Naive thymus-derived CD8-positive, alpha-beta T cell (primary cell): ENCODE measurements at regions of chr7 and their contacts with region 1.

Region 1: DNA sequence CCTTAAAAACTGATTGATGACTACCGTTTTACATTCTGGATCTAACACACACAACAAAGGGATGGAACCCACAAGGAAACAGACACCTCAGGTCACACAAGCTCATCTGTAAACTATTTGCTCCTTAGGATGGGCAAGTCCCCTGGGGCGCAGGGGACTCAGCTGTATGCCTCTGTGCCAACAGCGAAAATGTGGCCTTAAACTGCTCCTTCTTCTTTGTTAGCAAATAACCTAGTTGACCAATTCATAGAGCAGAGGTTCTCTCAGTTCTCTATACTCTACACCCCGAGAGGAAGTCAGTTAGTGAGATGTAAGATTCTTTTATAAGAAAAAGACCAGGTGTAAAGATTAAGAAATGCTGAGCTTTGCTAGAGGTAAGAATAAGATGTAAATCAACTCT is 181.9 kb upstream of the PRSS58 start:
- DNase-seq: no peak
- ATAC-seq: no peak
- H3K4me3 Mint-ChIP-seq: peak overlapping the region in 2 of 10 donors; percentile 30 to 57
- H3K27ac Mint-ChIP-seq: peak overlapping the region in 1 of 10 donors; percentile 60
- H3K4me1 Mint-ChIP-seq: peaks cover 21 to 60% (median 44%) of the 10 kb centered on the region in 4 donors
- H3K27me3 Mint-ChIP-seq: peaks cover 0 to 3% (median 0%) of the 10 kb centered on the region in 5 donors

Region 2: DNA sequence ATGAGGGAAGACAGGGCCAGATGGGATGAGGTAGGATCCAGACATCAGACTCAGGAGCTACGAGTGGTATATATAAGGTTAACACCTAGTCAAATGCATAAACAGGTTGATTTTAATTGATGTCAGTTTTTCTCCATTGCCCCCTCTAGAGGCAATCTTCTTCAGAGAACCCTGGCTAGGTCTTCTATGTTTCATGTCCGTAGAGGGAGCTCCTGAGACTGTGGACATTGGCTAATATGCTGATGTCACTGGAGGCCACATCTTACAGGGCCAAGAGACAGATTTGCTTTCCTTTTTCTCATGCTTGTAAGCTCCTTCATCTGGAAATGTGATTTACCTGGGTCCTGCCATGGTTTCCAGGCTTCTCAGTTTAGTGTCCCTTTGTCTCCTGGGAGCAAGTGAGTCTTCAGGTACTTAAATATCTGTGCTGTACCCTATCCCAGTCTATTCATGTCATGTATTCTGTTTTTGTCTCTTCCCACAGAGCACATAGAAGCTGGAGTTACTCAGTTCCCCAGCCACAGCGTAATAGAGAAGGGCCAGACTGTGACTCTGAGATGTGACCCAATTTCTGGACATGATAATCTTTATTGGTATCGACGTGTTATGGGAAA is 147.9 kb after region 1 on chr7:
- POLR2A ChIA-PET with region 1: no interaction called
- DNase-seq: peak in 5 of 10 donors; percentile 4 to 43 (median 15)
- ATAC-seq: peak; percentile 79 to 88
- H3K4me3 Mint-ChIP-seq: peak overlapping the region in 5 of 10 donors; percentile 10 to 41 (median 33)
- H3K27ac Mint-ChIP-seq: peak overlapping the region in 7 of 10 donors; percentile 8 to 56 (median 41)
- H3K4me1 Mint-ChIP-seq: peaks cover 0 to 4% (median 2%) of the 10 kb centered on the region in 4 donors
- H3K27me3 Mint-ChIP-seq: no peaks in the 10 kb centered on the region

Region 3: DNA sequence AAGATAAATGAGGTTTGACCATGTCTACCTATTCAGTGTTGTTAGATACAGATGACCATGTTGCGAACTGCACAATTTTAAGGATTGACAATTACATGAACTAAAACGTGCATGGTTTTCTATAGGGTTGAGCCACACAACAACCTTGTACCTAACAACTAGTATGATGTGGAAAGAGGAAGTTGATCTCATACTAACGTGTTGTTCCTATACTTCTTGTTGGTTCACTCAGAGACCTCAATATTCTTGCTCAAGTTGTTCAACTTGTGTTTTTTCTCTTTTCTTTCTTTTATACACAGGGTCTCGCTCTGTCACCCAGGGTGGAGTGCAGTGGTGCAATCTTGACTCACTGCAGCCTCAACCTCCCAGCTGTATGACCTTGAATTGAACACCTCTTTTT is 528.5 kb after region 1 on chr7:
- POLR2A ChIA-PET with region 1: interaction called, 10 read pairs
- DNase-seq: no peak
- ATAC-seq: no peak
- H3K4me3 Mint-ChIP-seq: no peak overlapping the region
- H3K27ac Mint-ChIP-seq: peak overlapping the region in 1 of 10 donors; percentile 74
- H3K4me1 Mint-ChIP-seq: no peaks in the 10 kb centered on the region
- H3K27me3 Mint-ChIP-seq: peaks cover 20 to 73% (median 41%) of the 10 kb centered on the region in 5 donors